A673 (cell line): ENCODE measurements at regions of chr10 and their contacts with region 1.

Region 1: DNA sequence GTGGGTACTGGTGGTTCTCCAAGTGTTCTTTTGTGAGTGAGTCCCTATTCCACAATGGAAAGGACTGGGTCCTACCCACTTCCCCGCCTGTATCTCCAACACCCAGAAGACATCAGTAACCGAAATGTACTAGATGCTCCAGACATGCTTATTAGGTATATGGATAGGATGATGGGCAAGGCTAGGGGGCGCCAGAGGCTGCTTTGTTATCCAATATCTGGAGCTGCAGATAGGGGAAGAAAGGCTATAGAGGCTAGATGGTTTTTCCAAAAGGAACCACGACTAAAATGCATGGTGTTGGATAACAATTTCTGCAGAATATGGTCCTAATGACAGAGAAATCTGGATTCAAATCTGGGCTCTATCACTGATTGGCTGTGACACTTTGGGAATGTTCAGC is 56.2 kb upstream of the TM9SF3 start:
- DNase-seq: peak; percentile 66
- H3K4me3 ChIP-seq: no peak overlapping the region
- H3K27ac ChIP-seq: no peak overlapping the region
- H3K4me1 ChIP-seq: no peaks in the 10 kb centered on the region
- H3K27me3 ChIP-seq: peaks cover 5% of the 10 kb centered on the region
- CTCF ChIP-seq: peak; percentile 73

Region 2: GRCh38 chr10:96374985-96375830 is 267.8 kb before region 1 on chr10:
- CTCF ChIA-PET with region 1: interaction called, 11 read pairs
- POLR2A ChIA-PET with region 1: no interaction called
- intact Hi-C with region 1: loop called (anchors 10 kb)
- DNase-seq: peak; percentile 93
- H3K4me3 ChIP-seq: peak overlapping the region; percentile 41
- H3K27ac ChIP-seq: no peak overlapping the region
- H3K4me1 ChIP-seq: no peaks in the 10 kb centered on the region
- H3K27me3 ChIP-seq: no peaks in the 10 kb centered on the region
- CTCF ChIP-seq: peak; percentile 98

Region 3: DNA sequence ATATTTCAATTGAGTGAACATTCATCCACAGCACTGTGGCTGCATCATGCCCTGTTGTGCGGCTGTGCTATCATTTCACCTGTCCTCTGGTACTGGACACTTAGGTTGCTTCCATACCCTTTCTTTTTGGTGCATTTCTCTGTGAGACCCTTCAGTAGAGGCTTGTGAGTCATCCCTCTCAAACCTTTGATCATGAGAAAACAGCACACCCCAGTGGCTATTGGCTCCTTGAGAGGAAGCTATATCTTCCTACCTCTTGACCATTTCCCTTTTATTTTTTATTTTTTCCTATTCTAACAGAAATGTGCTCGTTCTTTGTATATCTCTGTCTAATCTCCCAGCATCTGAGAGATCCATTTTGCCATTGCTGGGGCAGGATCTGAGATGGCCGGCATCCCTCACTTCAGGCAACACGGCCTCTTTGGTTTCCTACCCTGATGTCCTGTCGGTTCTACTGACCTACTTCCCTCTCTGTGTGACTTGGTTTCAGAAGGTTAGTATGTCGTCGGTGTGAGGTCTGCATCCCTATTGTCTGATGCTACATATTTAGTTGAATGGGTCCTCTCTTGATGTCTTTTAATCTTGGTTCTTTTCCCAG is 101.1 kb after region 1 on chr10:
- CTCF ChIA-PET with region 1: interaction called, 11 read pairs
- POLR2A ChIA-PET with region 1: no interaction called
- intact Hi-C with region 1: loop called (anchors 5 kb)
- DNase-seq: no peak
- H3K4me3 ChIP-seq: no peak overlapping the region
- H3K27ac ChIP-seq: no peak overlapping the region
- H3K4me1 ChIP-seq: peaks cover 3% of the 10 kb centered on the region
- H3K27me3 ChIP-seq: no peaks in the 10 kb centered on the region
- CTCF ChIP-seq: 0 out of 2 replicates have a peak, but pooled peaks have one; percentile 28

Region 4: GRCh38 chr10:96831867-96832720 is 189.1 kb after region 1 on chr10 and contains the start of gene LCOR:
- CTCF ChIA-PET with region 1: interaction called, 6 read pairs
- POLR2A ChIA-PET with region 1: no interaction called
- intact Hi-C with region 1: loop called (anchors 2 kb)
- DNase-seq: peak; percentile 94
- H3K4me3 ChIP-seq: peak within 1 kb of the TSS; percentile 90
- H3K27ac ChIP-seq: peak within 1 kb of the TSS; percentile 91
- H3K4me1 ChIP-seq: peaks cover 16% of the 10 kb centered on the region
- H3K27me3 ChIP-seq: no peaks in the 10 kb centered on the region
- CTCF ChIP-seq: no peak
- total RNA-seq, gene LCOR: 39.2 and 42.6 TPM in 2 replicates